ENCODE measurements at regions of chrX and their contacts with region 1.

Region 1: GRCh38 chrX:119235872-119236622 is at the start of gene PGRMC1:
- DNase-seq: peak; percentile 73
- H3K4me3 Mint-ChIP-seq: peak within 1 kb of the TSS; percentile 92
- H3K27ac Mint-ChIP-seq: peak within 1 kb of the TSS; percentile 74
- H3K4me1 Mint-ChIP-seq: peaks cover 28% of the 10 kb centered on the region
- H3K27me3 Mint-ChIP-seq: peaks cover 17% of the 10 kb centered on the region
- total RNA-seq, gene PGRMC1: 41.1 and 41.6 TPM in 2 replicates

Region 2: DNA sequence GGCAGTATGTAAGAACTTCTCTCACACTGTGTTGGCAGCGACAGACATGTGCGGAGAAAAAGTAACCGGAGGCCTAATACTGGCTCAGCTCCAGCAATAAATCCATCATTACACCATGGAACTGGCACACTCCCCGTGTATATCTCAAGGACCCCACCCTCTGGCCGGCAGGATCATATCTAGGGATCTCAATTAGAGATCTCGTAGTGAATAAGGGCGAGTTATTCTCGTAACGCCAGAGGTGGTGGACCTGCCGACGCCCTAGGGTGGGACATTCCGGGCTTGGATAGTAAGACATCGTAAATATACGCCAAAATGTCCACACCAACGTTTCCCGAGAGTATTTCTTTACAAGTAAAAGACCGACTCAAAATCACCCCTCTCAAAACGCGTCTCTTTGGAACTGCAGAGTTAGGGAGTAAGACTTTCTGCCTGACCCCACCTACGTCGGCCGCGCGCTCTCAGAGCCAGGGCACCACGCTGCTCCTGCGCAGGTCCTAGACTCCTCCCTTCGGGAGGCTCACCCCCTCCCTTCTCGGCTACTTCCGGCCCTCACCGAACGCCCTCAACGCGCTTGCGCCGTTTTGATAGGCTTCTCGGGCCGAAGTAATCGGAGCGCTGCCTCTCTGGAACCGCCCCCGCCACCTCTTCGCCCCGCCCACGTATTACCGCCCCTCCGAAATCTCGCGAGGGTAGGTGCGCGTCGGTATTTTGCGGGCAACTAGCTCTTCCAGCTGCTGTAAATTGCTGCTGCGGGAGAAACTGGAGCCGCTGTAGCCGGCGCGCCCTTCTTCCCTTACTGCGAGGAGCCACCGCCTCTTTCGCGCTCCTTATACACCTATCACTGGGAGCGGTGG is 890.4 kb before region 1 on chrX and contains the start of gene WDR44:
- intact Hi-C with region 1: loop called (anchors 2 kb)
- DNase-seq: peak; percentile 89
- H3K4me3 Mint-ChIP-seq: peak within 1 kb of the TSS; percentile 99
- H3K27ac Mint-ChIP-seq: peak within 1 kb of the TSS; percentile 99
- H3K4me1 Mint-ChIP-seq: peaks cover 39% of the 10 kb centered on the region
- H3K27me3 Mint-ChIP-seq: peaks cover 3% of the 10 kb centered on the region
- total RNA-seq, gene WDR44: 10.0 and 11.3 TPM in 2 replicates

Region 3: GRCh38 chrX:118974088-118974907 is 261.7 kb before region 1 on chrX and contains the start of gene LONRF3:
- intact Hi-C with region 1: loop called (anchors 2 kb)
- DNase-seq: peak; percentile 8
- H3K4me3 Mint-ChIP-seq: peak within 1 kb of the TSS; percentile 88
- H3K27ac Mint-ChIP-seq: peak within 1 kb of the TSS; percentile 96
- H3K4me1 Mint-ChIP-seq: peaks cover 13% of the 10 kb centered on the region
- H3K27me3 Mint-ChIP-seq: peaks cover 23% of the 10 kb centered on the region
- total RNA-seq, gene LONRF3: 0.52 and 0.71 TPM in 2 replicates

Region 4: DNA sequence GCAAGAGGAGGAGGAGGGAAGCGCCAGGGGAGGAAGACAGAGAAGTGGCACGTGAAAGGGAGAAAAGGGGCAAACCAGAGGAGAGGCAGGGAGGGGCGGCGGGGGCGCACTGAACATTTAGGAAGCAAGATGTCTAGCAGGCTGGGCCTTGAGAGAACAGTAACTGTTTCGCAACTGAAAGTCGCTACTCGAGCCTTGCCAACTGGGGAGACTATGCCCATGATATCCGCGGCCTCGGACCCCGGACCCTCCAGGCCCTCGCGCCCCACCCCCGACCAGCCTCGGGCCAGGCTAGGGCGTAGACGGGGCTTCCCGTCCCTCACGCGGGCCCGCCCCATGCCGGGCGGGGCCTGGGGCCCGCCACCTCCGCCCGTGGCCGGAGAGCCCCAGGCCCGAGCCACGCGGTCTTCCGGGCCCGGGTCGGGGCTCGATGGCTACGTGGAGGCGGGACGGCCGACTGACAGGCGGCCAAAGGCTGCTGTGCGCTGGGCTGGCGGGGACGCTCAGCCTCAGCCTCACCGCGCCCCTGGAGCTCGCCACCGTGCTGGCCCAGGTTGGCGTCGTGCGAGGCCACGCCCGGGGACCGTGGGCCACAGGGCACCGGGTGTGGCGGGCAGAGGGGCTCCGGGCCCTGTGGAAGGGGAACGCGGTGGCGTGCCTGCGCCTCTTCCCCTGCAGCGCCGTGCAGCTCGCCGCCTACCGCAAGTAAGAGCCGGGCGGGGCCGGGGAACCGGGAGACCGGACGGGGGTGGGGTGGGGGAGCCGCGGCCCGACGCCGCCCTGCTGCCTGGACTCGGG is 163.1 kb after region 1 on chrX and contains the start of gene SLC25A43:
- intact Hi-C with region 1: loop called (anchors 2 kb)
- DNase-seq: peak; percentile 14
- H3K4me3 Mint-ChIP-seq: peak within 1 kb of the TSS; percentile 89
- H3K27ac Mint-ChIP-seq: peak within 1 kb of the TSS; percentile 88
- H3K4me1 Mint-ChIP-seq: peaks cover 28% of the 10 kb centered on the region
- H3K27me3 Mint-ChIP-seq: peaks cover 2% of the 10 kb centered on the region
- total RNA-seq, gene SLC25A43: 9.8 and 12.6 TPM in 2 replicates

Region 5: DNA sequence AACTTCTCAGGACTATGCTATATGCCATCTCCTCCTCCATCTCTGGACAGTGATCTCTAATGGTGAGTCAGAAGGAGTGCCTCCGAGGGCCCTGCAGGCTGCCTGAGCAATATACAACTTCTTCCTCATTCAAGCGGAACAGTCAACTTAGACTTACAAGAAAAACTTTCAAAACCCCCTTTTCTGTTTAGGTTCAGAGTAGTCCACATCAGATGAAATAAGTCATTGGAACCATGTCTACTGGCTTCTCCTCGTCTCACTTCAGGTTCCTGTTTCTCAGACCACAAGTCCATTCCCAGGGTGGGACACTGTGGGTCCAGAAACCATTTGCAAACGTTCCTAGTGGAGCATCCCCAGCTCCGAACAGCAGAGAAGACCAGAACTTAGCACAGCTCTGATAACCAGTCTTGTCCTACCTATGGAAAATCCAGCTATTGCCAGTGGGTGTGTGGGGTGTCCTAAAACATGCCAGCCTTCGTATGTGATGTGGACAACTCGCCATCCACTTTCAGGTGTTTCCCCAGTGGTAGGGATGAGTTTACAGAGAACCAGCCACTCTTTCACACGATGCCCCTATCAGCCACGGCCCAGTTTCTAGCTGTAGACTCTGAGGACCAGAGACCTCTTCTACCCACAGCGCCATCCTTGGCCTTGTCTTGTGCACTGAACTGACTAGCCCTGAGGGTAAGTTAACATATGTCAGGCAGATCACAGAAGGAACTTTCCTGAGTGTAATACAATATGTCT is 402.9 kb after region 1 on chrX:
- intact Hi-C with region 1: no loop called
- DNase-seq: no peak
- H3K4me3 Mint-ChIP-seq: no peak overlapping the region
- H3K27ac Mint-ChIP-seq: peak overlapping the region; percentile 40
- H3K4me1 Mint-ChIP-seq: peaks cover 19% of the 10 kb centered on the region
- H3K27me3 Mint-ChIP-seq: no peaks in the 10 kb centered on the region

Region 6: GRCh38 chrX:119852382-119853353 is 616.6 kb after region 1 on chrX and contains the start of gene UPF3B:
- intact Hi-C with region 1: loop called (anchors 2 kb)
- DNase-seq: peak; percentile 90
- H3K4me3 Mint-ChIP-seq: peak within 1 kb of the TSS; percentile 94
- H3K27ac Mint-ChIP-seq: peak within 1 kb of the TSS; percentile 97
- H3K4me1 Mint-ChIP-seq: peaks cover 8% of the 10 kb centered on the region
- H3K27me3 Mint-ChIP-seq: no peaks in the 10 kb centered on the region
- total RNA-seq, gene UPF3B: 11.0 and 13.0 TPM in 2 replicates

Measured in activated T-helper 1 cell treated with anti-CD3 and anti-CD28 coated beads, Interleukin-12 subunit alpha, Interleukin-12 subunit beta, Interleukin-2, Interleukin-4 antibody, amounts not matched to agents 30 ng/mL and 10 ng/mL and 1 ng/mL, durations not matched to agents 14 hours and 24 hours and 36 hours (primary cell).